Naive thymus-derived CD4-positive, alpha-beta T cell (primary cell): ENCODE measurements at regions of chr2 and their contacts with region 1.

Region 1: DNA sequence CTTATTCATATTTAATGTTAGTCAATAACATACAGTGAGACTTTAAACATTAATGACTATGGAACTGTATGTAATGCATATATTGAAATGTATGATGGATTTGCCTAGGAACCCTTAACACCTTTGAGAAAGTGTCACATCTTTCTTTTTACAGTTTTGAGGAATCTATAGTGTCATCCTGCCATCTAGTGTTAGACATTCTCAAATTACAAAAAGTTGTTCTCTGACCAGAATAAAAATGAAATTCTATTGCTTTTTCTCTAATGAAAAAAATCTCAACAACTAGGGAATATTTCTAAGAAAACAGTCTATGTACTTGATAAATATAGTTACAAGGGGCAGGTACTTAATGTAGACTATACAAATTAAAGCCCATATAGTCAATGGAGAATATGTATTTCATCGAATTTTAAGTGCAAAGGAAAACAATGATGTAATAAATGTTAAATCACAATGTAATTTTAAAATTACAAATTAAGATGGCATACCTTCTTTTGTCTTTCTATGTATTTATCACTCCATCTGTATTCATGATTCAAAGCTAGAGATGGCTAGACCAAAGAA is 5.1 kb upstream of the CALCRL start:
- DNase-seq: peak in 4 of 9 donors; percentile 4 to 36 (median 20)
- ATAC-seq: no peak
- H3K4me3 ChIP-seq: no peak overlapping the region
- H3K4me3 Mint-ChIP-seq: no peak overlapping the region
- H3K27ac ChIP-seq: no peak overlapping the region
- H3K27ac Mint-ChIP-seq: no peak overlapping the region
- H3K4me1 ChIP-seq: no peaks in the 10 kb centered on the region
- H3K4me1 Mint-ChIP-seq: peaks cover 3 to 6% (median 5%) of the 10 kb centered on the region in 7 donors
- H3K27me3 ChIP-seq: no peaks in the 10 kb centered on the region
- H3K27me3 Mint-ChIP-seq: peaks cover 0 to 1% (median 0%) of the 10 kb centered on the region in 5 donors

Region 2: GRCh38 chr2:187403568-187404260 is 49.4 kb before region 1 on chr2:
- CTCF ChIA-PET with region 1: no interaction called
- POLR2A ChIA-PET with region 1: no interaction called
- intact Hi-C with region 1: no loop called
- DNase-seq: no peak
- ATAC-seq: no peak
- H3K4me3 ChIP-seq: no peak overlapping the region
- H3K4me3 Mint-ChIP-seq: no peak overlapping the region
- H3K27ac ChIP-seq: no peak overlapping the region
- H3K27ac Mint-ChIP-seq: no peak overlapping the region
- H3K4me1 ChIP-seq: no peaks in the 10 kb centered on the region
- H3K4me1 Mint-ChIP-seq: no peaks in the 10 kb centered on the region
- H3K27me3 ChIP-seq: no peaks in the 10 kb centered on the region
- H3K27me3 Mint-ChIP-seq: no peaks in the 10 kb centered on the region

Region 3: DNA sequence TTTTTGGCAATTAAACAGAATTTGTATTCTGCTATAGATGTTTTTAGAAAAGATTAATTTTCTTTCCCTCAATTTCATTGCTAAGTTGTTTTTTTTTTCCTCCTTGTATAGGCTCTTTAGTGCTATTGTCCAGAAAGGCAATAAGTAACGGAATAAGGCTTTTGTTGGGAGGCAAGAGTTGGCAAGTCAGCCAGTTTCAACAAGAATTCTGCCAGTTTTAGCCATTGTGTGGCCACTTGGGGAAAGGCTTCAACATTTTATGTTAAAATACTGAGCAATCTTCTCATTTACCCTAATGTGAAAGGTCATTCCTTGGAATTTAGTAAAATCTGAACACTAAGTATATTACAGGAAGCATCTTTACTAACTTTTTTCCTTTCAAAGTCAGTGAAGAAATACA is 14.7 kb before region 1 on chr2:
- CTCF ChIA-PET with region 1: no interaction called
- POLR2A ChIA-PET with region 1: no interaction called
- intact Hi-C with region 1: loop called in 1 of 2 experiments (anchors 2 kb)
- DNase-seq: no peak
- ATAC-seq: no peak
- H3K4me3 ChIP-seq: no peak overlapping the region
- H3K4me3 Mint-ChIP-seq: no peak overlapping the region
- H3K27ac ChIP-seq: no peak overlapping the region
- H3K27ac Mint-ChIP-seq: no peak overlapping the region
- H3K4me1 ChIP-seq: no peaks in the 10 kb centered on the region
- H3K4me1 Mint-ChIP-seq: peaks cover 0 to 2% (median 0%) of the 10 kb centered on the region in 7 donors
- H3K27me3 ChIP-seq: no peaks in the 10 kb centered on the region
- H3K27me3 Mint-ChIP-seq: no peaks in the 10 kb centered on the region

Region 4: GRCh38 chr2:187547353-187547979 is 94.3 kb after region 1 on chr2:
- CTCF ChIA-PET with region 1: no interaction called
- POLR2A ChIA-PET with region 1: no interaction called
- intact Hi-C with region 1: no loop called
- DNase-seq: no peak
- ATAC-seq: peak; percentile 83
- H3K4me3 ChIP-seq: no peak overlapping the region
- H3K4me3 Mint-ChIP-seq: no peak overlapping the region
- H3K27ac ChIP-seq: no peak overlapping the region
- H3K27ac Mint-ChIP-seq: no peak overlapping the region
- H3K4me1 ChIP-seq: no peaks in the 10 kb centered on the region
- H3K4me1 Mint-ChIP-seq: no peaks in the 10 kb centered on the region
- H3K27me3 ChIP-seq: peaks cover 0 to 4% of the 10 kb centered on the region in 2 donors
- H3K27me3 Mint-ChIP-seq: peaks cover 0 to 15% (median 4%) of the 10 kb centered on the region in 5 donors